Motor neuron (in vitro differentiated cells): ENCODE measurements at regions of chr1 and their contacts with region 1.

Region 1: GRCh38 chr1:177567407-177567806 is 396.6 kb downstream of the BRINP2 start:
- ATAC-seq: no peak
- H3K4me3 ChIP-seq: no peak overlapping the region
- H3K27ac ChIP-seq: no peak overlapping the region
- H3K4me1 ChIP-seq: no peaks in the 10 kb centered on the region

Region 2: GRCh38 chr1:177650947-177651346 is 83.5 kb after region 1 on chr1:
- in situ Hi-C with region 1: loop called in 1 of 9 experiments (anchors 25 kb)
- ATAC-seq: peak in 1 of 8 experiments; percentile 32
- H3K4me3 ChIP-seq: no peak overlapping the region
- H3K27ac ChIP-seq: no peak overlapping the region
- H3K4me1 ChIP-seq: no peaks in the 10 kb centered on the region